PC-9 (cell line): ENCODE measurements at regions of chr9 and their contacts with region 1.

Region 1: GRCh38 chr9:35945341-35946018 is 12.5 kb downstream of the OR2S2 start:
- DNase-seq: peak in 1 of 2 experiments; percentile 52
- H3K4me3 ChIP-seq: no peak overlapping the region
- H3K27ac ChIP-seq: no peak overlapping the region
- H3K4me1 ChIP-seq: peaks cover 39% of the 10 kb centered on the region
- H3K27me3 ChIP-seq: no peaks in the 10 kb centered on the region
- CTCF ChIP-seq: peak; percentile 67

Region 2: DNA sequence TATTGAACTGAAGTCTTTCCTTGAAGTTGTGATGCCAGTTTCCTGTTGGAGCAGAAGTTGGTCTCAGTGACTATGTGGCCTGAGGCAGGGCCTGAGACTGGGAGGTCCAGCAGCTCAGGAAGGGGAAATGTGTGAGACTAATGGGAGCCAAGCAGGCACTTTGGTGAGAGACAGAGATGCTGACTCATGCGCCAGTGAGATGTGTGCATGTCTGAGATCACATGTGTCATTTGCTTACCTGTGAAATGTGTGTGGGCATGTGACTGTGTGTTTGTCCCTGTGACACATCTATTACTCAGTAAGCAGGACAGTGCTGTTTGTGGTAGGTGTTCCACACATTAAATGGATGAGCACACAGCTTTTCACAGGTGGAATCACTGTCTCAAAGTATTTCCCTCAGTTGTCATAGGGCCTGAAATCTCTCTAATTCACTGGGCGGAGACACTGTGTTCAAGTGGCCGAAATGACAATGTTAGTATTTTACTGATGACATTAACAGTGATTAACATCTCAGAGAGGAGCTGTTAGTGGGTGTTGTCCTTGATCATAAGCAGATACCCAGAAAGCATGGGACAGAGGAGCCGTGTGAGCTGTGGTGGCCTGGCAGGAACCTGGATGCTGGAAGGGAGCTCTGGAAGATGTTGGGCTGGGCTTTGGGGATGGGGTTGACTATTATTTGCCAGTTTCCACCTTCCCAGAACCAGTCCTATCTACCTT is 146.7 kb before region 1 on chr9:
- CTCF ChIA-PET with region 1: no interaction called
- POLR2A ChIA-PET with region 1: no interaction called
- intact Hi-C with region 1: no loop called
- DNase-seq: peak in 1 of 2 experiments; percentile 58
- H3K4me3 ChIP-seq: no peak overlapping the region
- H3K27ac ChIP-seq: peak overlapping the region; percentile 29; the same call in 1 of the 2 replicates
- H3K4me1 ChIP-seq: 0 out of 2 replicates have a peak, but pooled peaks cover 7% of the 10 kb centered on the region
- H3K27me3 ChIP-seq: no peaks in the 10 kb centered on the region
- CTCF ChIP-seq: no peak

Region 3: DNA sequence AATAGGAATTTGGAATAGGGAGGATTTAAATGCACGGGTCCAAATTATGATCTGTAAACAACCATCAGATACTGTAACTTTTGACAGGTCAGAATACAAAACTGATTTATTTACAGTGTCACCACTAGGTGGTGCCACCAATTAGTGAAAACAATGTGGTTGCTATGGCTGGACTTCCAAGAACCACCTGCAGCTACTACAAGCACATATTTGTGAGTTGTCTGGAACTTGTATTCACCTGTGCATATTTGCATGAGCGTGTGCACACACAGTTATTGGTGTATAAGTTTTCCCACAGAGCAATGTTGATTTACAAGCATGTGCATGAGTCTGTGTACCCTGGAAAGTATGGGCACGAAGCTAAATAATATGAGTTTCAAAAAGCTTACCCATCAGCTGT is 42.4 kb before region 1 on chr9:
- CTCF ChIA-PET with region 1: interaction called, 4 read pairs
- POLR2A ChIA-PET with region 1: interaction called, 6 read pairs
- intact Hi-C with region 1: loop called (anchors 2 kb)
- DNase-seq: peak in 1 of 2 experiments; percentile 54
- H3K4me3 ChIP-seq: no peak overlapping the region
- H3K27ac ChIP-seq: no peak overlapping the region
- H3K4me1 ChIP-seq: peaks cover 38% of the 10 kb centered on the region
- H3K27me3 ChIP-seq: no peaks in the 10 kb centered on the region
- CTCF ChIP-seq: peak; percentile 78

Region 4: GRCh38 chr9:35914301-35914807 is 31.1 kb before region 1 on chr9:
- CTCF ChIA-PET with region 1: interaction called, 18 read pairs
- POLR2A ChIA-PET with region 1: interaction called, 3 read pairs
- intact Hi-C with region 1: no loop called
- DNase-seq: peak; percentile 55 to 69
- H3K4me3 ChIP-seq: no peak overlapping the region
- H3K27ac ChIP-seq: no peak overlapping the region
- H3K4me1 ChIP-seq: peaks cover 21% of the 10 kb centered on the region
- H3K27me3 ChIP-seq: no peaks in the 10 kb centered on the region
- CTCF ChIP-seq: no peak

Region 5: GRCh38 chr9:36560857-36561221 is 615.4 kb after region 1 on chr9:
- CTCF ChIA-PET with region 1: no interaction called
- POLR2A ChIA-PET with region 1: no interaction called
- intact Hi-C with region 1: loop called (anchors 5 kb)
- DNase-seq: peak; percentile 5 to 65
- H3K4me3 ChIP-seq: no peak overlapping the region
- H3K27ac ChIP-seq: no peak overlapping the region
- H3K4me1 ChIP-seq: peaks cover 10% of the 10 kb centered on the region; the same call in 1 of the 2 replicates
- H3K27me3 ChIP-seq: no peaks in the 10 kb centered on the region
- CTCF ChIP-seq: no peak